ENCODE measurements at regions of chr1 and their contacts with region 1.

Region 1: DNA sequence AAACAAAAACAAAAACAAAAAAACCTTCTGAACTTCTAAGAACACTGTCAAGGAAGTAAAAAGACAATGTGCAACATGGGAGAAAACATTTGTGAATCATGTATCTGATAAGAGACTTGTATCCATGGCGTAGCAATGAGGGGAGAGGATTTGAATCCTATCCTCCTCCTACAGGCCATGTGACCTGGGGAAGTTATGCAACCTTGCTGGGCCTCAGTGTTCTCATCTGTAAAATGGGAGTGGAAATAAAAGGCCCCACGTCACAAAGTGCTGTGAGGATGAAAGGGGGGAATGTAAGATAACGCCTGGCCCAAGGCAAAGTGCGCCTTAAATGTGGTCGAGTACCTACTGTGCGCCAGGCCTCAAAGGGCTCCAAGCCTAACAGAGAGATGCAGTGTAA is 83.7 kb downstream of the DISP3 start:
- DNase-seq: no peak
- H3K4me3 ChIP-seq: no peak overlapping the region
- H3K27ac ChIP-seq: no peak overlapping the region
- H3K4me1 ChIP-seq: no peaks in the 10 kb centered on the region
- H3K27me3 ChIP-seq: peaks cover 4 to 57% of the 10 kb centered on the region in 2 donors
- CTCF ChIP-seq: no peak
- POLR2A ChIP-seq: no peak

Region 2: DNA sequence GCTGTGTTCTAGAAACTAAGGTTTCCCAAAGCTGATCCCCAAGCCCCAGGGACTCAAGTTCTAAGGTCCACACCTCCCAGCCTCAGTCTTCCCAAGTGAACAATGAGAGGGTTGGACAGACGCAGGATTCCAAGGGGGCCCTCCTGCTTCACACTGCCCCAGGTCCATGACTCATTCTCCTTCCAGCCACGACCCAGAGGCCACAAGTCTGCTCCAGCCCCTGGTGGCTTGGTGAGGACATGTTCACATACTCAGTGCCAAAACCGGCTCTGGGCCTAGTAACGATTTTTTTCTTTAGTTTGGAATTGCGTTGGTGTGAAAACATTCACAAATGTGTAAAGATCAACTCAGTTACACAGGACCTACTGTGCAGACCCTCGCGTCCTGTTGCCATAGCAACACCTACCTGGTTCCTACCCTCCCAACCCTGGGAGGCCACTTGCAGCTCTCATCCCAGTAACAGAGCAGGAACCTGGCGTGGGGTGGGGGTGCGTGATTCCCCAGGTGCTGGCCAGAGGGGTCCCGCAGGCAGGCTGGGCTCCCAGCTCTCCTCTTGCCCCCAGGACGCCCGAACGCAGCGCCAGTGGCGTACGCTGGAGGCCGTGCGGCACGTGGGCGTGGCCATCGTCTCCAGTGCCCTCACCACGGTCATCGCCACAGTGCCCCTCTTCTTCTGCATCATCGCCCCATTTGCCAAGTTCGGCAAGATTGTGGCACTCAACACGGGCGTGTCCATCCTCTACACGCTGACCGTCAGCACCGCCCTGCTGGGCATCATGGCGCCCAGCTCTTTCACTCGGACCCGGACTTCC is 26.7 kb before region 1 on chr1:
- intact Hi-C with region 1: loop called (anchors 1 kb)
- DNase-seq: no peak
- H3K4me3 ChIP-seq: no peak overlapping the region
- H3K27ac ChIP-seq: no peak overlapping the region
- H3K4me1 ChIP-seq: no peaks in the 10 kb centered on the region
- H3K27me3 ChIP-seq: peaks cover 0 to 33% of the 10 kb centered on the region in 2 donors
- CTCF ChIP-seq: no peak
- POLR2A ChIP-seq: no peak

Measured in breast epithelium (tissue), 4 donors.